ENCODE measurements at regions of chr11 and their contacts with region 1.

Region 1: DNA sequence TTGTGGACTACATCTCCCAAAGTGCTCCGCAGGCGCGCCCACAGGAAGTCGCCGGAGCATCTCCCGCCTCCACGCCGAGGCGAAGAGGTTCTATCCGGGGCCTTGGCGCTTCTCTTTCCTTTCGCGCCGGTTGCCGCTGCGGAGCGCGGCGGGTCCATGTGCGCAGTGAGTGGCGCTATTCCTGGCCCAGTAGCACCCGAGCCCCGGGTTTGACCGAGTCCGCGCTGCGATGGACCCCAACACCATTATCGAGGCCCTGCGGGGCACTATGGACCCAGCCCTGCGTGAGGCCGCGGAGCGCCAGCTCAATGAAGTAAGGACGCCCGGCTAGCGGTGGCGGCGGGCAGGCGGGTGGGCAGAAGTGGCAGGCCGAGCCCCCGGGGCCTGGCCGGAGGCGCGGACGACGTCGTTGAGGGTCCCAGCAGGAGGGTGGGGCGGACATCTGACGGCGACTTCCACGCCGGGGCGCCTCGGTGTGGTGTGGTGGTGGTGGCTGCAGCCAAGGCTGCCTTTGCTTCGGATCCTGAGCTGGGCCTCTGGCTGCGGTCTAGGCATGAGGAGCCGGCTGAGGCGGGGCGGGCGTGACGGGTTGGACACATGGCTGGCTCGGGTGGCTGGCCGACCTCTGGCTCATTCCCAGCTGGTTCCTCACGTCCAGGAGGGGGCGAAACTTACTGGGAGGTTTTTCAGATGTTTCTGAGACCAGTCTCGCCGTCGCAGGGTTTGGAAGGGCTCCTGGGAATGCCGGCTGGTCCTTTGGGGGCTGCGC is at the start of gene IPO7:
- DNase-seq: peak; percentile 72 to 93 (median 84)
- ATAC-seq: peak; percentile 98
- H3K4me3 ChIP-seq: peak within 1 kb of the TSS; percentile 82
- H3K4me3 Mint-ChIP-seq: peak within 1 kb of the TSS; percentile 96
- H3K27ac ChIP-seq: peak within 1 kb of the TSS; percentile 69 to 78
- H3K27ac Mint-ChIP-seq: peak within 1 kb of the TSS; percentile 80
- H3K4me1 ChIP-seq: peaks cover 29% of the 10 kb centered on the region
- H3K4me1 Mint-ChIP-seq: peaks cover 42% of the 10 kb centered on the region
- H3K27me3 ChIP-seq: no peaks in the 10 kb centered on the region
- H3K27me3 Mint-ChIP-seq: no peaks in the 10 kb centered on the region
- CTCF ChIP-seq: no peak
- total RNA-seq, gene IPO7: 40.7 to 51.6 TPM

Region 2: GRCh38 chr11:8688414-8689362 is 696.0 kb before region 1 on chr11:
- CTCF ChIA-PET with region 1: no interaction called
- POLR2A ChIA-PET with region 1: interaction called, 3 read pairs
- intact Hi-C with region 1: loop called in 1 of 2 experiments (anchors 10 kb)
- DNase-seq: peak; percentile 46 to 89 (median 77)
- ATAC-seq: peak; percentile 76
- H3K4me3 ChIP-seq: peak overlapping the region; percentile 73
- H3K4me3 Mint-ChIP-seq: peak overlapping the region; percentile 96
- H3K27ac ChIP-seq: peak overlapping the region; percentile 73 to 84
- H3K27ac Mint-ChIP-seq: peak overlapping the region; percentile 90
- H3K4me1 ChIP-seq: peaks cover 26% of the 10 kb centered on the region
- H3K4me1 Mint-ChIP-seq: peaks cover 43% of the 10 kb centered on the region
- H3K27me3 ChIP-seq: no peaks in the 10 kb centered on the region
- H3K27me3 Mint-ChIP-seq: no peaks in the 10 kb centered on the region
- CTCF ChIP-seq: no peak

Region 3: GRCh38 chr11:9160166-9160565 is 224.6 kb before region 1 on chr11:
- CTCF ChIA-PET with region 1: no interaction called
- POLR2A ChIA-PET with region 1: no interaction called
- intact Hi-C with region 1: loop called in 1 of 2 experiments (anchors 10 kb)
- DNase-seq: peak in 2 of 14 experiments; percentile 20 to 37
- ATAC-seq: no peak
- H3K4me3 ChIP-seq: no peak overlapping the region
- H3K4me3 Mint-ChIP-seq: no peak overlapping the region
- H3K27ac ChIP-seq: no peak overlapping the region
- H3K27ac Mint-ChIP-seq: no peak overlapping the region
- H3K4me1 ChIP-seq: no peaks in the 10 kb centered on the region
- H3K4me1 Mint-ChIP-seq: no peaks in the 10 kb centered on the region
- H3K27me3 ChIP-seq: no peaks in the 10 kb centered on the region
- H3K27me3 Mint-ChIP-seq: no peaks in the 10 kb centered on the region
- CTCF ChIP-seq: no peak

Region 4: GRCh38 chr11:9187616-9188015 is 197.1 kb before region 1 on chr11:
- CTCF ChIA-PET with region 1: no interaction called
- POLR2A ChIA-PET with region 1: no interaction called
- intact Hi-C with region 1: no loop called
- DNase-seq: no peak
- ATAC-seq: no peak
- H3K4me3 ChIP-seq: no peak overlapping the region
- H3K4me3 Mint-ChIP-seq: no peak overlapping the region
- H3K27ac ChIP-seq: no peak overlapping the region
- H3K27ac Mint-ChIP-seq: no peak overlapping the region
- H3K4me1 ChIP-seq: no peaks in the 10 kb centered on the region
- H3K4me1 Mint-ChIP-seq: no peaks in the 10 kb centered on the region
- H3K27me3 ChIP-seq: no peaks in the 10 kb centered on the region
- H3K27me3 Mint-ChIP-seq: no peaks in the 10 kb centered on the region
- CTCF ChIP-seq: no peak

Region 5: GRCh38 chr11:9363954-9364912 is 20.5 kb before region 1 on chr11:
- CTCF ChIA-PET with region 1: interaction called, 8 read pairs
- POLR2A ChIA-PET with region 1: interaction called, 12 read pairs
- intact Hi-C with region 1: no loop called
- DNase-seq: peak; percentile 45 to 94 (median 66)
- ATAC-seq: peak; percentile 91
- H3K4me3 ChIP-seq: peak overlapping the region; percentile 65
- H3K4me3 Mint-ChIP-seq: peak overlapping the region; percentile 89
- H3K27ac ChIP-seq: peak overlapping the region; percentile 55 to 92
- H3K27ac Mint-ChIP-seq: peak overlapping the region; percentile 88
- H3K4me1 ChIP-seq: peaks cover 17% of the 10 kb centered on the region
- H3K4me1 Mint-ChIP-seq: peaks cover 16% of the 10 kb centered on the region
- H3K27me3 ChIP-seq: no peaks in the 10 kb centered on the region
- H3K27me3 Mint-ChIP-seq: no peaks in the 10 kb centered on the region
- CTCF ChIP-seq: no peak

Region 6: GRCh38 chr11:9573052-9573774 is 188.5 kb after region 1 on chr11 and contains the start of gene WEE1:
- CTCF ChIA-PET with region 1: no interaction called
- POLR2A ChIA-PET with region 1: interaction called, 3 read pairs
- intact Hi-C with region 1: loop called in 1 of 2 experiments (anchors 5 kb)
- DNase-seq: peak; percentile 85 to 98 (median 94)
- ATAC-seq: peak; percentile 89
- H3K4me3 ChIP-seq: peak within 1 kb of the TSS; percentile 96
- H3K4me3 Mint-ChIP-seq: peak within 1 kb of the TSS; percentile 90
- H3K27ac ChIP-seq: peak within 1 kb of the TSS in 1 of 2 donors; percentile 69
- H3K27ac Mint-ChIP-seq: peak within 1 kb of the TSS; percentile 64
- H3K4me1 ChIP-seq: peaks cover 32% of the 10 kb centered on the region
- H3K4me1 Mint-ChIP-seq: peaks cover 46% of the 10 kb centered on the region
- H3K27me3 ChIP-seq: no peaks in the 10 kb centered on the region
- H3K27me3 Mint-ChIP-seq: peaks cover 15% of the 10 kb centered on the region
- CTCF ChIP-seq: no peak
- total RNA-seq, gene WEE1: 9.3 to 10.7 TPM